ENCODE measurements at regions of chr13 and their contacts with region 1.

Region 1: DNA sequence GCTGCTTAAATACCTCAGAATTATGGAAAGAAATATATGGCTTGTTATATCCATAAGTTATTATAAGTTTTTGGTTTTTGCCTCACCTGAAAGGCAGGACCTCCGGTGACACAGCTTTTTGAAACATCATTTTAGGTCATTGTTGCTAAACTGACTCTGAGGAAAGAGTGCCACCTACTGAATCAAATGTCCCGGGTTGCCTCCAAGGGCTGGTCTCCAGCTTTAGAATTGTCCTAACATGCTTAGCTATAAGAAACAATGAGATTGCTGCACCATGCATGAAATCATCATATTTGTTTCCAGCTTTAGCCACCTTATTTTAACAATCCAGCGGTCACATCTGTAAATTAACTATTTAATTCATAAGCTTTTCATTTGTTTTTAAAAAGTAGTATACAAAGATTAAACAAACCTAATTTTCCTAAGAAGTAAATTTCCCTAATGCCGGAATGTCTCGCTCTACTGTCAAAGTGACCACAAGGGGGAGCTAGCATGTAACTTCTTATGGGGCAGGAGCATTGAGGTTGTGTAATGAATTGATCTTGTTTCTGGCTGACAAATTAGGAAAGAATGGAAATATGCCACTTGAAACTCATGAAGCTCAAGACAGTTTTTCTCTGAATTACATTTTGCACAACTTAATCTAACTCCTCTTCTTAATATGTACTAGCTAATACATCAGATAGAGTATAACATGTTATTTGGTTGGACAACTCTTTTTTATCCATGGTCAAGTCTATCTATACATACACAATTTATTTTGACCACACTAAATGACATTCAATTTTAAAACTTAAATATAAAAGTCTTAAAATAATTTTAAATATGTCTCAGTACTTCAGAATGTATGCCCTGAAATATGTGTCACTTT is 6.7 kb upstream of the PCDH17 start:
- DNase-seq: peak in 4 of 5 donors; percentile 23 to 28 (median 27)
- ATAC-seq: no peak
- H3K4me3 ChIP-seq: no peak overlapping the region
- H3K27ac ChIP-seq: no peak overlapping the region
- H3K4me1 ChIP-seq: peaks cover 0 to 8% (median 0%) of the 10 kb centered on the region in 12 donors
- H3K27me3 ChIP-seq: peaks cover 0 to 15% (median 0%) of the 10 kb centered on the region in 9 donors
- CTCF ChIP-seq: peak; percentile 70 to 93 (median 82)
- POLR2A ChIP-seq: no peak

Region 2: DNA sequence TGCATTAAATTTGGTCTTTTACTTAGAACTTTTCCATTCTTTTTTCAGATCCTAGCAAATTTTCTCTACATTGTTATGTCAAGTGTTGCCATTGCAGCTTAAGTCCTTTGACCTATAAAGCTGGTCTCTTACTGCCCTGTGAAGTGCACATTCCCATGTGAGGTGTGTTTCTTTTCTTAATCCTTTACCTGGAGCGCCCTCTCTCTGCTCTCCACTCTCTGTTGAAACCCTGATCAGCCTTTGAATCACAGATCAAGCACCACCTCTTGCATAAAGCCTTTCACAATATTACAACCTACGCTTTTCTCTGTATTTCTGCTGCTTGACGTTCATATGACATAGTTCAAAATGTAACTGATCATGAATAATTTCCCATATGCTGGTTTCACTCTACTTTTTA is 91.5 kb after region 1 on chr13:
- intact Hi-C with region 1: loop called in 2 of 10 experiments (anchors 5 to 10 kb)
- DNase-seq: no peak
- ATAC-seq: no peak
- H3K4me3 ChIP-seq: no peak overlapping the region
- H3K27ac ChIP-seq: no peak overlapping the region
- H3K4me1 ChIP-seq: no peaks in the 10 kb centered on the region
- H3K27me3 ChIP-seq: no peaks in the 10 kb centered on the region
- CTCF ChIP-seq: peak in 3 of 12 donors; percentile 5 to 13 (median 11)
- POLR2A ChIP-seq: no peak

Region 3: GRCh38 chr13:57857945-57858344 is 233.1 kb after region 1 on chr13:
- intact Hi-C with region 1: loop called (anchors 1 to 10 kb)
- DNase-seq: no peak
- ATAC-seq: no peak
- H3K4me3 ChIP-seq: no peak overlapping the region
- H3K27ac ChIP-seq: no peak overlapping the region
- H3K4me1 ChIP-seq: no peaks in the 10 kb centered on the region
- H3K27me3 ChIP-seq: no peaks in the 10 kb centered on the region
- CTCF ChIP-seq: peak in 7 of 12 donors; percentile 14 to 43 (median 33)
- POLR2A ChIP-seq: no peak

Region 4: GRCh38 chr13:58953638-58954037 is 1328.8 kb after region 1 on chr13:
- intact Hi-C with region 1: loop called in 2 of 10 experiments (anchors 10 kb)
- DNase-seq: no peak
- ATAC-seq: no peak
- H3K4me3 ChIP-seq: no peak overlapping the region
- H3K27ac ChIP-seq: no peak overlapping the region
- H3K4me1 ChIP-seq: no peaks in the 10 kb centered on the region
- H3K27me3 ChIP-seq: no peaks in the 10 kb centered on the region
- CTCF ChIP-seq: no peak
- POLR2A ChIP-seq: no peak

Region 5: DNA sequence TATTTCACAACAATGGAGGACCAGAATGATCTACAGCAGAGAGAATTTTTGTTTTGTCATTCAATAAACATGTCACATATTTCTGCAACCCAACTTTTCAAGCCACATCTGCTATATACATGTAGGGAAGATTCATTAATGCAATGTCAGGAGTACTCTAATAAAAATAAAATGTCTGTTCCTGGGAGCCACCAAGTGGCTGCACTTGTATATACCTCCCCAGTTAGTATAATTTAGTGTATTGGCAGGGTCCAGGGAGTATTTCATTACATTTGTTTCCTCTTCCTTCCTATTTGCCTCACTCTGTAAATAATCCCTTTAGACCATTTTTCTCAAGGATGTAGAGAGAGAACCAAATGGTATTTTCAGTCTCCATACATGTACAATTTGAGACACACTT is 1370.0 kb after region 1 on chr13:
- intact Hi-C with region 1: loop called in 1 of 10 experiments (anchors 10 kb)
- DNase-seq: no peak
- ATAC-seq: no peak
- H3K4me3 ChIP-seq: no peak overlapping the region
- H3K27ac ChIP-seq: no peak overlapping the region
- H3K4me1 ChIP-seq: no peaks in the 10 kb centered on the region
- H3K27me3 ChIP-seq: no peaks in the 10 kb centered on the region
- CTCF ChIP-seq: peak in 4 of 12 donors; percentile 10 to 12 (median 10)
- POLR2A ChIP-seq: no peak

Region 6: GRCh38 chr13:59337070-59337469 is 1712.3 kb after region 1 on chr13:
- intact Hi-C with region 1: loop called in 1 of 10 experiments (anchors 10 kb)
- DNase-seq: peak in 1 of 5 donors; percentile 30
- ATAC-seq: peak; percentile 57 to 86 (median 80)
- H3K4me3 ChIP-seq: no peak overlapping the region
- H3K27ac ChIP-seq: peak overlapping the region in 9 of 12 donors; percentile 5 to 71 (median 46)
- H3K4me1 ChIP-seq: peaks cover 0 to 26% (median 16%) of the 10 kb centered on the region in 12 donors
- H3K27me3 ChIP-seq: no peaks in the 10 kb centered on the region
- CTCF ChIP-seq: no peak
- POLR2A ChIP-seq: no peak

Measured in heart left ventricle (tissue), 16 donors.